ENCODE measurements at regions of chr5 and their contacts with region 1.

Region 1: DNA sequence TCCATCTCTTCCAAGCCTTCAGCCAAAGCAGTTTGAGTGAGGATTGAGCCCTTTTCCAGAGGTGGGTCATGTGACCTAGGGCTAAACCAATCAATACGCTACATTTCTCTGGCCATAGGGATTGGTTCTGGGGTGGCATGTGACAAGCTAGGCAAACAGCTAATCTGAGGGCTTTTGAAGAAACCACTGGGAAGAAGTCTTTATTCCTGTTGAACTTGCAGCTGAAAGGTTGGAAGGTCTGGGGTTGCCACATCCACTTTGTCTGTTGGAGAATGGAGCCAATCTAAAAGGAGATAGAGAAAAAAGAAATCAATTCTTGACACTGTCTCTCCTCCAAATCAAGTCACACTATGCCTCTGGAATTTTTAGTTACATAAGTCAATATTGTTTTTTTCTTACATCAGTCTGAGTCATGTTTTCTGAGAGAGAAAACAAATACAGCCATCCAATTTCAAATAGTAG is 637.8 kb upstream of the WWC1 start:
- DNase-seq: peak; percentile 80
- ATAC-seq: peak; percentile 62
- H3K4me3 ChIP-seq: no peak overlapping the region
- H3K27ac ChIP-seq: peak overlapping the region; percentile 86
- H3K4me1 ChIP-seq: peaks cover 37% of the 10 kb centered on the region
- H3K27me3 ChIP-seq: no peaks in the 10 kb centered on the region
- CTCF ChIP-seq: no peak

Region 2: DNA sequence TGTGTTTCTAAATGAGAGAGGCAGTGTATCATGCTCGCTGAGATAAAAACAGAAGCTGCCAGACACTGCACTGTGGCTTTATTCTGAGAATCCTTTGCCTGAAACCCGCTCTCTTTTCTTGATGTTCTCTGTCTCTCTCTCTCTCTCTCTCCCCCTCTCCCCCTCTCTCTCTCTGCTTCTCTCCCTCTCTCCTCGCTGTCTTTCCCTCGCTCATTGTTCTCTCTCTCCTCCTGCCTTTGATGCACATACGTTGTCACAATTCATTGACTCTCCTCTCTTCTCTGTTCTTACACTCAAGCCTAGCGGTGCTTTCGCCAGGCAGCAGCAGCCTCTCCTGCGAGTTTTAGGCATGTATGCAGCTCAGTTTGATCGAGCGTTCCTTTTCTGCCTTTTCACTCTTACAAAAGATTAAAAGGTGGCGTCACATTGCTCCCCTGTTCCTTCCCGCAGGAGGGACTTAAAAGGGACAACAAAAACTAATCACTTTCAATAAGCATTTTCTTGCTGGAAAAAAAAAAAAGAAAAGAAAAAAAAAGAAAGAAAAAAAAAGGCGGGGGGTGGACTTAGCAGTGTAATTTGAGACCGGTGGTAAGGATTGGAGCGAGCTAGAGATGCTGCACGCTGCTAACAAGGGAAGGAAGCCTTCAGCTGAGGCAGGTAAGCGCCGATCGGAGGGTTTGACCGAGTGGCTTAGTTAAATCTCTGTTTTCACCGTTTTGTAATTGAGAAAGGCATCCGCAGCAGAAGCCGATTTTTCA is 80.1 kb before region 1 on chr5:
- CTCF ChIA-PET with region 1: no interaction called
- POLR2A ChIA-PET with region 1: no interaction called
- intact Hi-C with region 1: no loop called
- DNase-seq: no peak
- ATAC-seq: 0 out of 2 replicates have a peak, but pooled peaks have one; percentile 15
- H3K4me3 ChIP-seq: no peak overlapping the region
- H3K27ac ChIP-seq: no peak overlapping the region
- H3K4me1 ChIP-seq: no peaks in the 10 kb centered on the region
- H3K27me3 ChIP-seq: peaks cover 99% of the 10 kb centered on the region
- CTCF ChIP-seq: no peak

Region 3: DNA sequence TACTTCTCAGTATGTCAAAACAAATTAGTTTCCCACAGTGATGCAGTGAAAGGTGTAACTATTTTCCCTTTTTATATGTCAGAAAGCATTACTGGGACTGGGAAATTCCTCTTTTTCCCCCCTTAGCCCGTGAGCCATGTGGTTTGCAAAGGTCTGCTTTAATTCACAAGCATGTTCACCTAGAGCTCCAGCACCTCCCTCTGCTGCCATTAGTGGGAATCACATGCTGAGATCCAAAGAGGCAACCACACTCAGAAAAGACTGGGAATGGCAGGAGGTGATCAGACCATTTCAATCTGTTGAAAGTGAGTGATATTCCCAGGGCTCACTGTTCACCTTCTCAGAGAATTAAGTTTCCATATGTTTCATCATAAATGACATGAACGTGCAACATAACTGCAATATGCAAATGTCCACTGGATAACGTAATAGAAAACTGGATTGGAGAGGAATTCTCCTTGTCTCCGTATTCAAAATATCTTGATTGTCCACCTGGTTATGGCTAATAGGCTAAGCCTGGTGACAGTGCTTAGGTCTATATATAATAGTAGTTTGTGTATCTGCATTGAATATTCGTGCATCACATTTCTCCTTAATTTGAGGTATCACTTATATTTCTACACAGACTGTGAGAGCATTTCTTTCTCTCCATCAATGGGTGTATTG is 65.8 kb before region 1 on chr5:
- CTCF ChIA-PET with region 1: no interaction called
- POLR2A ChIA-PET with region 1: no interaction called
- intact Hi-C with region 1: loop called (anchors 5 kb)
- DNase-seq: peak; percentile 50
- ATAC-seq: peak; percentile 79
- H3K4me3 ChIP-seq: no peak overlapping the region
- H3K27ac ChIP-seq: no peak overlapping the region
- H3K4me1 ChIP-seq: no peaks in the 10 kb centered on the region
- H3K27me3 ChIP-seq: peaks cover 46% of the 10 kb centered on the region
- CTCF ChIP-seq: peak; percentile 45; the same call in 1 of the 2 replicates

Region 4: DNA sequence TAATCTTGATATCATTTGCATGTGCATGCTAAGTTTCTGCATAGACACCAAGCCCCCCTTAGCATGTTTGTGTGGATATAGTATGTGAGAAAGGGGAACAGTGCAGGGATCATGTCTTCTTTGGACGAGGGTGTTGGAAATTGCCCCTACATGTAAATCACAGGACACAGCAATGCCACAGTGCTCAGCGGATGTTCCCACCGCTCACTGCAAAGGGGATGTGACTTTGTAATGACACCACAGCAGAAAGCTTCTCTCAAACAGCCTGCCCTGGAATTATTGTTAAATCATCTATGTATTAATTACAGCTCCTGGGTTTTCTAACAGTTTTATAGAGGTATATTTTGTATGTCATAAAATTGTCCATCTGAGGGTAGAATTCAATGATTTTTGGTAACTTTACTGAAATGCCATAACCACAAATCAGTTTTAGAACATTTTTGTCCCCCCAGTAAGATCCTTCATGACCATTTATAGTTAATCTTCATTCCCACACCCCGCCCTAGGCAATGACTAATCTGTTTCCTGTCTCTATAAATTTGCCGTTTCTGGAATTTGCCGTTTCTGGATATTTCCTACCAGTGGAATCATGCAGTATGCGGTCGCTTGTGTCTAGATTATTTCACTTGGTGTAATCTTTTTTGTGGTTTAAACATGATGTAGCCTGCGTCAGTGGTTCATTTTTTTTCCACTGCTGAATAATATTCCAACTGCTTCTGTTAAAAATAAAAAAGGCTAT is 10.7 kb before region 1 on chr5:
- CTCF ChIA-PET with region 1: no interaction called
- POLR2A ChIA-PET with region 1: no interaction called
- intact Hi-C with region 1: loop called (anchors 1 kb)
- DNase-seq: peak; percentile 76
- ATAC-seq: peak; percentile 59
- H3K4me3 ChIP-seq: no peak overlapping the region
- H3K27ac ChIP-seq: peak overlapping the region; percentile 59
- H3K4me1 ChIP-seq: peaks cover 31% of the 10 kb centered on the region
- H3K27me3 ChIP-seq: no peaks in the 10 kb centered on the region
- CTCF ChIP-seq: no peak

Region 5: DNA sequence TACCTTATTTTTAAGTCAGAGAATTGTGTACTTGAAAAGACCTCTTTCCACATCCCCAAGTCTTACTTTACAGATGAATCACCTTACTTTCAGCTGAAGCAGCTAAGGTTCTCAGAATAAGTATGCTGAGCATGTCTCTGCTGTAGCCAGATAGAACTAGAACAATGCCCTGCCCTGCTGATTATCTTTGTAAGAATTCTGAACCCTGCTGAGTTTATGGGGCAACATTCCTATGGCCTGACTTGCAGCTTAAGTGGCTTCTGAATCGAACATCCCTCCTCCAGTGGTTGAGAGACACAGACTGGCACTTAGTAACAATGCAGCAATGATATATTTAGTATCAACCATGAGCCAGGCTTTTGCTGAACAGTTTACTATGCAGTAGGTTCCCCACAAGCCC is 45.8 kb after region 1 on chr5:
- CTCF ChIA-PET with region 1: interaction called, 4 read pairs
- POLR2A ChIA-PET with region 1: no interaction called
- intact Hi-C with region 1: loop called (anchors 2 kb)
- DNase-seq: peak; percentile 94
- ATAC-seq: peak; percentile 98
- H3K4me3 ChIP-seq: 0 out of 2 replicates have a peak overlapping the region, but pooled peaks have one; percentile 27
- H3K27ac ChIP-seq: peak overlapping the region; percentile 90
- H3K4me1 ChIP-seq: peaks cover 30% of the 10 kb centered on the region
- H3K27me3 ChIP-seq: no peaks in the 10 kb centered on the region
- CTCF ChIP-seq: no peak